CD8-positive, alpha-beta T cell (primary cell): ENCODE measurements at regions of chr19 and their contacts with region 1.

Region 1: GRCh38 chr19:13060964-13061927 is 41.4 kb downstream of the LYL1 start:
- DNase-seq: peak; percentile 61 to 86 (median 82)
- ATAC-seq: peak; percentile 98
- H3K4me3 ChIP-seq: peak overlapping the region; percentile 48 to 71
- H3K4me3 Mint-ChIP-seq: peak overlapping the region; percentile 82
- H3K27ac ChIP-seq: no peak overlapping the region
- H3K27ac Mint-ChIP-seq: no peak overlapping the region
- H3K4me1 ChIP-seq: peaks cover 8% of the 10 kb centered on the region
- H3K4me1 Mint-ChIP-seq: peaks cover 8% of the 10 kb centered on the region
- H3K27me3 ChIP-seq: peaks cover 0 to 2% of the 10 kb centered on the region in 2 experiments
- H3K27me3 Mint-ChIP-seq: peaks cover 13% of the 10 kb centered on the region
- CTCF ChIP-seq: peak; percentile 96

Region 2: DNA sequence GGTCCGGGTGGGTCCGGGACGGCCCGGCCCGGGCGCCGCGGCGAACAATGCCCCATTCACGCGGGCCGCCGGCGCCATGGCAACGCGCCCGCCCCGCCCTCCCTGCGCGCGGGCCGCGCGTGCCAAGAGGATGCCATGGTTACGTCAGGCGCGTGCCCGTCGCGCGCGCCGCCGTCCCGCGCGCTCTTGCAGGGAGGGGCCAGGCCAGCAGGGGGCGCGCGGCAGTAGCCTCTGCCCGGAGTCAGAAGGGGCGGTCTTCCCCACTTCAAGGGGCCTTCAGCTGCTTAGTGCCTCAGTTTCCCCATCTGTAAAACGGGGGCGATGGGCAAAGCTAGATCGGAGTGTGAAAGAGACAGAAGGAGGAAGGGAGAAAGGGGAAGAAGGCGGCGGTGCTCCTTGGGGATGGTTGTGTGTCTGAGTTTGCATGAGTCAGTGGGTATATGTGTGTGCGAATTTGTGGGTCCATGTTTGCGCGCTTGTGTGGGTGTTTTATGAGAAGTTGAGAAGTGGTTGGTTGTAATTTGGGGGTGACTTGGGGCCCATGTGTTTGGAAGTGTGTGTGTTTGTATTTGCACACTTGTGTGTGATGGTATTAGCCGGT is 77.6 kb before region 1 on chr19:
- CTCF ChIA-PET with region 1: interaction called, 201 read pairs
- POLR2A ChIA-PET with region 1: no interaction called
- intact Hi-C with region 1: loop called (anchors 1 kb)
- DNase-seq: peak; percentile 64 to 90 (median 81)
- ATAC-seq: peak; percentile 77
- H3K4me3 ChIP-seq: no peak overlapping the region
- H3K4me3 Mint-ChIP-seq: no peak overlapping the region
- H3K27ac ChIP-seq: peak overlapping the region in 1 of 2 experiments; percentile 20
- H3K27ac Mint-ChIP-seq: no peak overlapping the region
- H3K4me1 ChIP-seq: peaks cover 15% of the 10 kb centered on the region
- H3K4me1 Mint-ChIP-seq: peaks cover 8% of the 10 kb centered on the region
- H3K27me3 ChIP-seq: peaks cover 3 to 25% of the 10 kb centered on the region in 2 experiments
- H3K27me3 Mint-ChIP-seq: peaks cover 3% of the 10 kb centered on the region
- CTCF ChIP-seq: peak; percentile 87

Region 3: GRCh38 chr19:13033819-13034611 is 27.2 kb before region 1 on chr19:
- CTCF ChIA-PET with region 1: interaction called, 83 read pairs
- POLR2A ChIA-PET with region 1: no interaction called
- intact Hi-C with region 1: loop called in 1 of 2 experiments (anchors 1 kb)
- DNase-seq: peak in 8 of 9 experiments; percentile 13 to 65 (median 50)
- ATAC-seq: peak; percentile 84
- H3K4me3 ChIP-seq: no peak overlapping the region
- H3K4me3 Mint-ChIP-seq: no peak overlapping the region
- H3K27ac ChIP-seq: no peak overlapping the region
- H3K27ac Mint-ChIP-seq: no peak overlapping the region
- H3K4me1 ChIP-seq: no peaks in the 10 kb centered on the region
- H3K4me1 Mint-ChIP-seq: no peaks in the 10 kb centered on the region
- H3K27me3 ChIP-seq: no peaks in the 10 kb centered on the region
- H3K27me3 Mint-ChIP-seq: no peaks in the 10 kb centered on the region
- CTCF ChIP-seq: peak; percentile 50

Region 4: DNA sequence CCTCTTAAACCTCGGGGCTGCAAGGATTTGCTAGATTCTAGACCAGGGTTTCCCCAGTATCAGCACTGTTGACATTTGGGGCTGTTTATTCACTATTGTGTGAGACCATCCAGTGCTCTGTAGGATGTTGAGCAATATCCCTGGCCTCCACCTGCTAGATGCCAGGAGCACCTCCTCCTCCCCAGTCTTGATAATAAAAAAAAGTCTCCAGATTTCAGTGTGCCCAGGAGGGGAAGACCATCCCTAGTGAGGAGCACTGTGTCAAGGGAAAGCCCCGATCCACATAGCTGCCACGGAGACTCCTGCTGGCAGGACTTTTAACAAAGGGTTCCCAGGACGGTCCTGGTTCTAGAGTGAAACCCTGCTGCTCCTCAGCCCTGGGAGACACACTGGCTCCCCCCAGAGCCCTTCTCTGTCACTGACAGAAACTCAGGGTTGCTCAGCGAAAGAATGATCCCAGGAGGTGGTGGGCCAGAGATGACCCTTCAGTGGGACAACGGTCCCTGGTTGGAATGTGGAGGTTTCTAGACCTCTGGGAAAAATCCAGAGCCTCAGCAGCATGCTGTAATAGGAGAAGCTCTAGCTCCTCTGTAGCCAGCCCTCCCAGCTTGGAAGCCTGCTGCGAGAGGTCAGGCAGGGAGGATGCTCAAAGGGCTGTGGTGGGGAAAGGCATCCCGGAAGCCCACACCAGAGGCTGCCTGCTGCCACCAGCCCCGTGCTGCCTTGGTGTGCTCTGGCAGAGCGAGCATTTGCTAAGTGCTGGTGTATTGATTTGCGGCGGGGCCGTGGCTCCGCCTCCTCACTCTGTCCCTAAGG is 21.2 kb after region 1 on chr19:
- CTCF ChIA-PET with region 1: interaction called, 16 read pairs
- POLR2A ChIA-PET with region 1: no interaction called
- intact Hi-C with region 1: no loop called
- DNase-seq: no peak
- ATAC-seq: no peak
- H3K4me3 ChIP-seq: no peak overlapping the region
- H3K4me3 Mint-ChIP-seq: no peak overlapping the region
- H3K27ac ChIP-seq: no peak overlapping the region
- H3K27ac Mint-ChIP-seq: no peak overlapping the region
- H3K4me1 ChIP-seq: no peaks in the 10 kb centered on the region
- H3K4me1 Mint-ChIP-seq: peaks cover 2% of the 10 kb centered on the region
- H3K27me3 ChIP-seq: no peaks in the 10 kb centered on the region
- H3K27me3 Mint-ChIP-seq: no peaks in the 10 kb centered on the region
- CTCF ChIP-seq: no peak

Region 5: DNA sequence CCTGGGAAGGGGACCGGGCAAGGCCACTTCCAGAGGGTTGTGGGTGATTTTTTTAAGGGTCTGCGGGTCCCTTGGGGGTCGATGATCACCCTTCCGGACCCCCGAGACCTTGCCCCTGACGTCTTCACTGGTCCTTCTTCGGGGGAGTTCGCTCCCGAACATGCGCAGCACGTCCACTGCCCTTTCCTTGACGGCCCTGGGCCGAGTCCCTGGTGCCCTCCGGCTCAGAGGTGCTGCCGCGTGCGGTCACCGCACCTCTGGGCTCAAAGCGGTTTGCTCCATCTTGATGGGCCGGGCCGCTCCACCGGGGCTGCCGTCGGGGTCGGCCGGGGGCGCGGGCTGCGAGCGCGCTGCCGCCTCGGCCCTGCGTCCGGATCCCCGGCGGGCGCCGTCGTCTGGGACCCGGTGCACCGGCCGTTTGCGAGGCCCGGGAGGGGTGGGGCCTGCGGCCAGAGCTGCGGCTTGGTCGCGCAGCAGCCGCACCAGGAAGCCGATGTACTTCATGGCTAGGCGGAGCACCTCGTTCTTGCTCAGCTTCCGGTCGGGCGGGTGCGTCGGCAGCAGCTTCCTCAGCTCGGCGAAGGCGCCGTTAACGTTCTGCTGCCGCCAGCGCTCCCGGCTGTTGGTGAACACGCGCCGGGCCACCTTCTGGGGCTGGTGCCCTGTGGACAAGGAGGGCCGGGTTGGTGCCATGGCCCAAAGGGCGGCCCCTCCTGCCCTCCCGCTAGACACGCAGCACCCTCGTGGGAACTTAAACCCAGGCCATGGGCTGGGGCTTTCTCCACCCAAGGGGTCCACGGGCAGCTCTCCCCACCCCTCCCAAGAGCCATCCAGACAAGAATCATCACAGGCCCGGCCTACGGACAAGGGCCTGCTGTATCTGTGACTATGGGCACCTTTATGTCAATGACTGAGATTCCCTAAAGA is 38.1 kb after region 1 on chr19:
- CTCF ChIA-PET with region 1: interaction called, 57 read pairs
- POLR2A ChIA-PET with region 1: no interaction called
- intact Hi-C with region 1: loop called in 1 of 2 experiments (anchors 2 kb)
- DNase-seq: peak; percentile 61 to 93 (median 81)
- ATAC-seq: peak; percentile 66
- H3K4me3 ChIP-seq: peak overlapping the region; percentile 35 to 54
- H3K4me3 Mint-ChIP-seq: peak overlapping the region; percentile 73
- H3K27ac ChIP-seq: peak overlapping the region; percentile 65 to 87
- H3K27ac Mint-ChIP-seq: peak overlapping the region; percentile 96
- H3K4me1 ChIP-seq: peaks cover 82% of the 10 kb centered on the region
- H3K4me1 Mint-ChIP-seq: peaks cover 51% of the 10 kb centered on the region
- H3K27me3 ChIP-seq: peaks cover 16 to 33% of the 10 kb centered on the region in 2 experiments
- H3K27me3 Mint-ChIP-seq: peaks cover 24% of the 10 kb centered on the region
- CTCF ChIP-seq: no peak